Activated CD8-positive, alpha-beta T cell treated with anti-CD3 and anti-CD28 coated beads for 36 hours (primary cell): ENCODE measurements at regions of chr9 and their contacts with region 1.

Region 1: GRCh38 chr9:22238809-22239684 is 207.6 kb upstream of the DMRTA1 start:
- DNase-seq: no peak
- ATAC-seq: no peak
- H3K4me3 Mint-ChIP-seq: no peak overlapping the region
- H3K27ac Mint-ChIP-seq: no peak overlapping the region
- H3K4me1 Mint-ChIP-seq: peaks cover 53% of the 10 kb centered on the region
- H3K27me3 Mint-ChIP-seq: peaks cover 5% of the 10 kb centered on the region
- CTCF ChIP-seq: peak; percentile 34

Region 2: GRCh38 chr9:22079873-22080341 is 159.1 kb before region 1 on chr9:
- CTCF ChIA-PET with region 1: interaction called, 11 read pairs
- POLR2A ChIA-PET with region 1: no interaction called
- intact Hi-C with region 1: no loop called
- DNase-seq: peak; percentile 82
- ATAC-seq: peak; percentile 95
- H3K4me3 Mint-ChIP-seq: peak overlapping the region; percentile 16
- H3K27ac Mint-ChIP-seq: peak overlapping the region; percentile 72
- H3K4me1 Mint-ChIP-seq: peaks cover 43% of the 10 kb centered on the region
- H3K27me3 Mint-ChIP-seq: peaks cover 26% of the 10 kb centered on the region
- CTCF ChIP-seq: no peak

Region 3: DNA sequence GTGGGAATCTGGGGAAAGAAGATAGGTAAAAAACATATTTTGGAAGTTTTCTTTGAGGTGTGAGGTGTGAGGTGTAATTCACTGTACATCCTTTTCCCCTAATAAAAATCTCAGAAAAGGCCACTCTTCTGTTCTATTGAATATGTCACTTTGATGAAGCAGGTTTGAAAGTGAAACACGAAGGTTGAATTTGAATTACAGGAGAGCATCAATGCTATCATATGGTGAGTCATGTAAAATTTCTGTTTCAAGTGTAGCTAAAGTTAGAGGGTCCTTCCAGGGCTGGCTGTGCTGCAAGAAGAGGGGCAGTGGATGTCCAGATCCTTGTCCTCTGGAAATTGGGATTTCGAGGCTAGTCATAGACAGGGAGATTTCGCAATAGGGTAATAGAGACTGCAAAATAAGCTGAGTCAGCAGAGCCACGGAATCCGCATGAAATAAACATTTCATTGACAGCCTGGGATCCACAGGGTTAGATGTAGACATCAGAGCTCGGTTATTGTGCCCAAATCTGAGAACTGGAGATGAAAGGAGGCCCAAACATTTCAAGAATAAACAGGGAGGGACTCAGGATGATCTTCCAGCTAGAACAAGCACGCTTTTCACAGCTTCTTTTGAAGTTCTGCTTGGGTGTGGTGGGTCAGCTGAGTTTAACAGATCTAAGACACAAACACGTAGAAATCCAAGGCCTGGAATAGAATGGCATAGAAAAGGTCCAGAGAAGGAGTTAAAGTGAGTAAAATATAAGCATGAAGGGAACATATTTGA is 35.5 kb before region 1 on chr9:
- CTCF ChIA-PET with region 1: interaction called, 14 read pairs
- POLR2A ChIA-PET with region 1: no interaction called
- intact Hi-C with region 1: no loop called
- DNase-seq: no peak
- ATAC-seq: peak; percentile 73
- H3K4me3 Mint-ChIP-seq: no peak overlapping the region
- H3K27ac Mint-ChIP-seq: no peak overlapping the region
- H3K4me1 Mint-ChIP-seq: peaks cover 12% of the 10 kb centered on the region
- H3K27me3 Mint-ChIP-seq: peaks cover 8% of the 10 kb centered on the region
- CTCF ChIP-seq: no peak

Region 4: GRCh38 chr9:22731786-22732185 is 492.7 kb after region 1 on chr9:
- CTCF ChIA-PET with region 1: no interaction called
- POLR2A ChIA-PET with region 1: no interaction called
- intact Hi-C with region 1: no loop called
- DNase-seq: no peak
- ATAC-seq: no peak
- H3K4me3 Mint-ChIP-seq: no peak overlapping the region
- H3K27ac Mint-ChIP-seq: no peak overlapping the region
- H3K4me1 Mint-ChIP-seq: no peaks in the 10 kb centered on the region
- H3K27me3 Mint-ChIP-seq: no peaks in the 10 kb centered on the region
- CTCF ChIP-seq: no peak